Activated T-helper 1 cell treated with anti-CD3 and anti-CD28 coated beads, Interleukin-12 subunit alpha, Interleukin-12 subunit beta, Interleukin-2, Interleukin-4 antibody, amounts not matched to agents 30 ng/mL and 10 ng/mL and 1 ng/mL, durations not matched to agents 14 hours and 24 hours and 36 hours (primary cell): ENCODE measurements at regions of chr3 and their contacts with region 1.

Region 1: GRCh38 chr3:69092030-69092516 is 7.3 kb downstream of the ARL6IP5 start:
- DNase-seq: no peak
- H3K4me3 Mint-ChIP-seq: peak overlapping the region; percentile 84
- H3K27ac Mint-ChIP-seq: peak overlapping the region; percentile 98
- H3K4me1 Mint-ChIP-seq: peaks cover 83% of the 10 kb centered on the region
- H3K27me3 Mint-ChIP-seq: no peaks in the 10 kb centered on the region

Region 2: DNA sequence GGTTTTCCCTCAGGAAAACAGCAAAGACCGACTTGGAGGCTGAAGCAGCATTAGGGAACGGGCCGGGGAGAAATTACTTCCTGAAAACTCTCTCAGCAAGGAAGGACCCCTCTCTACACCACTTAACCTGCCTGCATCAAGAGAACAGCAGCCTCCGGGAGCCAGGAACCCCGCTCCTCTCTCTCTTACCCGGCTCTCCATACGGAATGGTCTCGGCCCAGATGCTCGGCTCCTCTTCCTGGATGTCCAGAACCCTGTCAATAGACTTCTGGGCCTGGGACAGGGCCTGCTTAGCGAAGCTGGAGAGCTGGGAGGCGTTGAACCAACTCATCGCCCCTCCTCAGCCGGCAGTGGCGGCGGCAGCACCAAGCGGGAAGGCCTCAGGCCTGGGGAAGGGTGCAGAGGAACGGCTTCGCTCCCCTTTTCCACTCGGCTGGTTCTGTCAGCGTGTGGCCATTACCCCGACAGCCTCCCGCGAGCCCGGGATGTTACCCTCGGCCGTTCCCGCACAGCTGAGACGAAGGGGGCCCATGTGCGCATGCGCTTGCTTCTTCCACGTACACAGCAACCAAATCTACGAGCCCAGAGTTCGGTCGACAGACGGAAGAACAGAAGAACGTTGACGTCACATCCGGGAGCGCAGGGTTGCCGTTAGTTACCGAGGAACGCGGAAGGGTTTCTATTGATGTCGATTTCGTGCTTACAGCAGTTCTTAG is 40.2 kb before region 1 on chr3 and contains the start of gene TMF1:
- intact Hi-C with region 1: loop called (anchors 1 kb)
- DNase-seq: peak; percentile 96
- H3K4me3 Mint-ChIP-seq: peak within 1 kb of the TSS; percentile 97
- H3K27ac Mint-ChIP-seq: peak within 1 kb of the TSS; percentile 96
- H3K4me1 Mint-ChIP-seq: peaks cover 56% of the 10 kb centered on the region
- H3K27me3 Mint-ChIP-seq: peaks cover 1% of the 10 kb centered on the region
- total RNA-seq, gene TMF1: 43.0 and 43.1 TPM in 2 replicates

Region 3: GRCh38 chr3:69058180-69058946 is 33.7 kb before region 1 on chr3:
- intact Hi-C with region 1: loop called (anchors 1 kb)
- DNase-seq: peak; percentile 21
- H3K4me3 Mint-ChIP-seq: peak overlapping the region; percentile 25
- H3K27ac Mint-ChIP-seq: peak overlapping the region; percentile 90
- H3K4me1 Mint-ChIP-seq: peaks cover 38% of the 10 kb centered on the region
- H3K27me3 Mint-ChIP-seq: no peaks in the 10 kb centered on the region

Region 4: DNA sequence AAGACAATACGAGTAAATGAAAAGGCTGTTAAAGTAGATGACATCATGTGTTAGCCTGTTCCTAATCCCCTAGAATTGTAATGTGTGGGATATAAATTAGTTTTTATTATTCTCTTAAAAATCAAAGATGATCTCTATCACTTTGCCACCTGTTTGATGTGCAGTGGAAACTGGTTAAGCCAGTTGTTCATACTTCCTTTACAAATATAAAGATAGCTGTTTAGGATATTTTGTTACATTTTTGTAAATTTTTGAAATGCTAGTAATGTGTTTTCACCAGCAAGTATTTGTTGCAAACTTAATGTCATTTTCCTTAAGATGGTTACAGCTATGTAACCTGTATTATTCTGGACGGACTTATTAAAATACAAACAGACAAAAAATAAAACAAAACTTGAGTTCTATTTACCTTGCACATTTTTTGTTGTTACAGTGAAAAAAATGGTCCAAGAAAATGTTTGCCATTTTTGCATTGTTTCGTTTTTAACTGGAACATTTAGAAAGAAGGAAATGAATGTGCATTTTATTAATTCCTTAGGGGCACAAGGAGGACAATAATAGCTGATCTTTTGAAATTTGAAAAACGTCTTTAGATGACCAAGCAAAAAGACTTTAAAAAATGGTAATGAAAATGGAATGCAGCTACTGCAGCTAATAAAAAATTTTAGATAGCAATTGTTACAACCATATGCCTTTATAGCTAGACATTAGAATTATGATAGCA is 13.1 kb after region 1 on chr3:
- intact Hi-C with region 1: loop called (anchors 1 kb)
- DNase-seq: no peak
- H3K4me3 Mint-ChIP-seq: no peak overlapping the region
- H3K27ac Mint-ChIP-seq: no peak overlapping the region
- H3K4me1 Mint-ChIP-seq: peaks cover 36% of the 10 kb centered on the region
- H3K27me3 Mint-ChIP-seq: no peaks in the 10 kb centered on the region

Region 5: DNA sequence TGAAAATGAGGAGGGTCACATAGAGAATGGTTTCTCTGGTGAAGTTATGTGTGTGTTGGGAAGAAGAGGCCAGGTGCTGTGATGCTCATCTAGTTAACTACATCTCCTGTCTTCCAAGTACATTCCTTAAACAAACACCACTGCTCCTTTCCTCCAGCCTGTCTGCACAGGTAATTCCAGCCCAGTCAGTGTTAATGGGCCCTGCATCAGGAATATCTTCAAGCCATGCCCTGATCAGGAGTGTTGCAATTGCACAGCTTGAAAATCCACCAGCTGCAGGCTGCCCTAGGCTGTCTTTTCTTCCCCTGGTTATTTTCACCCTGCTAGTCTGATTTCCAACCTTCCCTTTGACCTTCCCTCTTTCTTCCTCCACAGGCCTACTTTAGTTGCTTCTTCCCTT is 72.2 kb after region 1 on chr3:
- intact Hi-C with region 1: no loop called
- DNase-seq: no peak
- H3K4me3 Mint-ChIP-seq: no peak overlapping the region
- H3K27ac Mint-ChIP-seq: no peak overlapping the region
- H3K4me1 Mint-ChIP-seq: peaks cover 8% of the 10 kb centered on the region
- H3K27me3 Mint-ChIP-seq: no peaks in the 10 kb centered on the region

Region 6: DNA sequence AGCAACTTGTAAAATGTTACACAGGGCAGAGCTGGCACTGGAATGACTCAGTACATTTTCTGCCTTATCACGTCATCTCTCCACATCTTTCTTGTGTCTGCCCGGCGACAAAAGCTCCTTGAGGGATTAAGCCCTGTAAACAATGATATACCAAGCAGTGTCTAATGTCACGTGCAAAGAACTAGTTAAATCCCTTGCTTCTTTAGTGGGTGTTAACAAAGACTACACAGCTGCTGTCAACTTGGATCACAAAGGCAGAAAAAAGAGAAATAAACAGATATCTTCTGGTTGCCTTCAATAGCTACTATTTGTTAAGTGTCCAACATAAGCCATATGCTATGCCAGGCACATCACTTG is 341.9 kb after region 1 on chr3:
- intact Hi-C with region 1: loop called (anchors 1 kb)
- DNase-seq: no peak
- H3K4me3 Mint-ChIP-seq: no peak overlapping the region
- H3K27ac Mint-ChIP-seq: peak overlapping the region; percentile 54
- H3K4me1 Mint-ChIP-seq: peaks cover 51% of the 10 kb centered on the region
- H3K27me3 Mint-ChIP-seq: no peaks in the 10 kb centered on the region